IMR-90 (cell line): ENCODE measurements at regions of chr2 and their contacts with region 1.

Region 1: GRCh38 chr2:210207929-210208328 is 17.3 kb downstream of the ACADL start:
- DNase-seq: no peak
- ATAC-seq: no peak
- H3K4me3 ChIP-seq: no peak overlapping the region
- H3K27ac ChIP-seq: no peak overlapping the region
- H3K4me1 ChIP-seq: no peaks in the 10 kb centered on the region
- H3K27me3 ChIP-seq: no peaks in the 10 kb centered on the region
- CTCF ChIP-seq: no peak
- POLR2A ChIP-seq: no peak
- RAD21 ChIP-seq: no peak

Region 2: DNA sequence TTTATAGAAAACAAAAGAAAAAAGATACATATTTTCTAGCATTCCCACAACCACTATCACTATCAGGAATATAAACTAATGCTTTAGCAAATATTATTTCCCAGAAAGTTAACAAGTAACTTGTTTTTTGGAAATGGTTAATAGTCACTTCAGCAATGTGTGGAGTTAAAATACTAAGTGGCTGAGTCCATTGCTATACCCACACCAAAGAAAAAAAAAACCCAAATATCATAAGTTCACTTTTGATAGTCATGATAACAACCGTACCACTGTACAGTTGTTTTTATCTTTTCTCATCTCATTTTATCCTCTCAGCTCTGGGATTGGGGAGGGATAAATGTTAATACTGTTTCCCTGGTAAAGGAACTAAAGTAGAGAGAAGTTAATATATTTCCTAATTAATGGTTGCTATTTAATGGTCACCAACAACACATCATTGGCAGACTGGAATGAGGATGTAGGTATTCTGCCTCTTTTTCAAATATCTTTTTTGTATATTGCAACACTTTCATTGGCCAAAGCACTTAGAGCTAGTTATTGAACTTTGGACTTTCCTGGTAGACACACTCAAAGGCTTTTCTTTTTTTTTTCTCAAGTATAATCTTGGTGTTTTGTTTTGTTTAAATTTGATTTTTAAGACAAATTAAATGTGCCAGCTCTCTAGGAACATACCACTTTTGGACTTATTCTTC is 18.3 kb before region 1 on chr2:
- CTCF ChIA-PET with region 1: no interaction called
- POLR2A ChIA-PET with region 1: no interaction called
- dilution Hi-C with region 1: no loop called
- in situ Hi-C with region 1: no loop called
- intact Hi-C with region 1: loop called (anchors 1 kb)
- DNase-seq: no peak
- ATAC-seq: no peak
- H3K4me3 ChIP-seq: no peak overlapping the region
- H3K27ac ChIP-seq: no peak overlapping the region
- H3K4me1 ChIP-seq: no peaks in the 10 kb centered on the region
- H3K27me3 ChIP-seq: peaks cover 1% of the 10 kb centered on the region; the same call in 1 of the 2 replicates
- CTCF ChIP-seq: no peak
- POLR2A ChIP-seq: no peak
- RAD21 ChIP-seq: no peak